ENCODE measurements at regions of chr14 and their contacts with region 1.

Region 1: DNA sequence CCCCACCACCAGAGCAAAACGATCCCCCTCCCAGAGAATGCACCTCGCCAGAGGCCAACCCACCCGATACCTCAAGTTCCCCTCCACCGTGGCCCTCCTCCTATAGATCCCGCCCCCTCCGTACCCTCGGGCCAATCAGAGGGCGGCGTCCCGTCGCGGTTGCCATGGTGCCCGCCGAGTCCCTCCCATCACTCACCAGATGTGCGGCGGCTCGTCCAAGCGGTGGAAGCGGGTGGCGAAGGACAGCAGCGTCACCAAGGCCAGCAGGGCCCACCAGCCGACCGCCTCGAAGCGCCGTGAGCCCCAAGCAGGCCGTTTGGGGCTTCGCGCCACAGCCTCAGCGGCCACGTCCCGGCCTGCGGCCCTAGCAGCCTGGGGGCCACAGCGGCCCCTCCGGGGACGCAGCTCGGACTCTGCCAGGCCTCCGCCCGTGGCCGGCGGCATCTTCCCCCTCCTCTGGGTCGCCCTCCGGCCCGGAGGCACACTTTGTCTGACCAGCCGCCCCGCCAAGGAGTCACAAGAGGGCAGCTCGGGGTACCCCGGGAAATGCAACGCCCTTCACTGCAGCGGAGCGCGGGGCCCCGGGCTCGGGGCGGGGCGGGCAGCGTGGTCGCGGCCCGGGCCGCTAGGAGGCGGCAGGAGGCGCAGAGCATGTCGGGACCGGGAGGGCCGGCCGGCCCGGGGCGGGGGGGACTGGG is at the start of gene POMT2:
- DNase-seq: peak; percentile 85 to 95 (median 91)
- ATAC-seq: peak; percentile 49
- H3K4me3 ChIP-seq: peak within 1 kb of the TSS; percentile 89 to 100
- H3K4me3 Mint-ChIP-seq: peak within 1 kb of the TSS; percentile 99
- H3K27ac ChIP-seq: peak within 1 kb of the TSS; percentile 90 to 97
- H3K27ac Mint-ChIP-seq: peak within 1 kb of the TSS; percentile 98
- H3K4me1 ChIP-seq: peaks cover 12% of the 10 kb centered on the region
- H3K4me1 Mint-ChIP-seq: peaks cover 20% of the 10 kb centered on the region
- H3K27me3 ChIP-seq: no peaks in the 10 kb centered on the region
- H3K27me3 Mint-ChIP-seq: no peaks in the 10 kb centered on the region
- CTCF ChIP-seq: no peak
- total RNA-seq, gene POMT2: 8.4 to 9.6 TPM

Region 2: DNA sequence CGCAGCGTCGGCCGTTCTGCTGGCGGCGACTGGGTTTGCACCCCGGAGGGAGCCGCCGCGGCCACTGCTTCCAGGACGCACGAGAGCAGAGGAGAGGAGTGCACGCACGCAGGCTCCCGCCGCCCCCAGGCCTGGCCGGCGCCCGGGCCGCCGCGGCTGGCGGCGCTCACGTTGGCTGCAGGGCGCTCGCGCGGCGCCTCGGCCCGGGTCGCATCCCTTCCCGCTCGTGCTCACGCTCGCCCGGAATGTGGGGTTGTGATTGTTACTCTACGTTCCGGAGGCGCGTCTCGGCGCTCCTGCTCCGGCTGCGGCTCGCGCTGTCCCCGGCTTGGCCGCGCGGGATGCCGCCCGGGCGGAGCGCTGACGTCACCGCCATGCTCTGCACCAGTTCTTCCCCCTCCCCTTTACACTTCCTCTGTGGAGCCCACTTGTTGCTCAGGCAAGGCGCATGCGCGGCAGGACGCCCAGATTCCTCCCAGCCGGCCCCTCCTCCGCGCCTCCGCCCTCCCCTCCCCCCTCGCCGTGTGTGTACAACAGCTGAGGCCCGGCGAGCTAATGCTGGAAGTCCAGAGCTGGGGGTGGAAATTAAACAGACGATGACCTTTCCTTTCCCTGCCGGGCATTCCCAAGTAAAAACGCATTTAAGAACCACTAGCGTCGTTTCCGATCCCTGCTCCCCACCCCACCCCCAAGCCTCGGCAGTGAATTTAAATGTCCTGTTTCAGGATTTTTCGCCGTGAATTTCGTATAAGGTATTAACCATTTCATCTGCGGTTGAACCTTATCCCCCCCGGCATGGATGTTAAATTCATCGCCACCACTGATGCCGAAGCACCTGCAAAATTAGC is 291.8 kb before region 1 on chr14 and contains the start of gene IRF2BPL:
- CTCF ChIA-PET with region 1: no interaction called
- POLR2A ChIA-PET with region 1: interaction called, 7 read pairs
- intact Hi-C with region 1: loop called in 1 of 2 experiments (anchors 1 kb)
- DNase-seq: peak; percentile 86 to 98 (median 94)
- ATAC-seq: peak; percentile 68
- H3K4me3 ChIP-seq: peak within 1 kb of the TSS; percentile 66 to 94
- H3K4me3 Mint-ChIP-seq: peak within 1 kb of the TSS; percentile 93
- H3K27ac ChIP-seq: peak within 1 kb of the TSS; percentile 90 to 94
- H3K27ac Mint-ChIP-seq: peak within 1 kb of the TSS; percentile 96
- H3K4me1 ChIP-seq: peaks cover 69% of the 10 kb centered on the region
- H3K4me1 Mint-ChIP-seq: peaks cover 60% of the 10 kb centered on the region
- H3K27me3 ChIP-seq: no peaks in the 10 kb centered on the region
- H3K27me3 Mint-ChIP-seq: no peaks in the 10 kb centered on the region
- CTCF ChIP-seq: peak; percentile 2
- total RNA-seq, gene IRF2BPL: 53.7 to 53.9 TPM

Region 3: GRCh38 chr14:77040059-77040740 is 280.2 kb before region 1 on chr14:
- CTCF ChIA-PET with region 1: no interaction called
- POLR2A ChIA-PET with region 1: no interaction called
- intact Hi-C with region 1: loop called in 1 of 2 experiments (anchors 2 kb)
- DNase-seq: peak; percentile 94 to 100 (median 99)
- ATAC-seq: peak; percentile 77
- H3K4me3 ChIP-seq: peak overlapping the region; percentile 42 to 47
- H3K4me3 Mint-ChIP-seq: peak overlapping the region; percentile 86
- H3K27ac ChIP-seq: peak overlapping the region; percentile 90 to 94
- H3K27ac Mint-ChIP-seq: peak overlapping the region; percentile 99
- H3K4me1 ChIP-seq: peaks cover 74% of the 10 kb centered on the region
- H3K4me1 Mint-ChIP-seq: peaks cover 90% of the 10 kb centered on the region
- H3K27me3 ChIP-seq: no peaks in the 10 kb centered on the region
- H3K27me3 Mint-ChIP-seq: no peaks in the 10 kb centered on the region
- CTCF ChIP-seq: no peak

Region 4: DNA sequence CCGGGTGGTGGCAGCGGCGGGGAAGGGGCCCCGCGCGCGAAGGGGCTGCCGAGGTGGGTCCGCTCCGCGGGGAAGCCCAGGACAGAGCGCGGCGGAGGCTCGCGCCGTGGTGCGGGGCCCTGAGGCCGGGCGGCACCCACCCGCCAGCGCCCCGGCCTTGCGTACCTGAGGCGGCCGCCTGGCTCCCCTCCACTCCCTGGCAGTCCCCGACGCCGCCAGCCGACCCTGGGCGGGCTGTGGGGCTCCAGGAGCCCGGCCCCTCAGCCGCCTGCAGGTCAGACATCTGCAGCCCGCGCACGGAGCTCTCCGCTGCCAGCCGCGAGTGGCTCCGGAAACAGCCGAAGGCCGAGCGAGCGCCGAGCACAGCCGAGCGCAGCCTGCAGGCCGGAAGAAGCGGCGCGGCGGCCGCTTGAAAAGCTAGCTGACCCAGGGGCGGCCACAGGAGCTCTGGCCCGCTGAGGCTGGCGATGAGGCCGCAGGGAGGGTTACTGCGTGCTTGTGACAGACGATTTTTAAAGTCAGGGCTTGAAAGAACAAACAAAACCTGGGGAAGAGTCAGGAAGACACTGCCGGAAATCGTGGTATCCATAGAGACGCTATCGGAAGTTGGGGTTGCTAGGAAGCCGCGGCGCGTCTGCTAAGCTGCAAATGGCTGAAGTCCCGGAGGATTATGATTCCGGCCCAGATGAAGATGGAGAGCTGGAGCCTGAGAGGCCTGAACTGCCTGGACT is 56.5 kb after region 1 on chr14 and contains the starts of genes SAMD15 and TMED8:
- CTCF ChIA-PET with region 1: interaction called, 9 read pairs
- POLR2A ChIA-PET with region 1: interaction called, 21 read pairs
- intact Hi-C with region 1: loop called (anchors 1 kb)
- DNase-seq: peak; percentile 69 to 92 (median 82)
- ATAC-seq: peak; percentile 95
- H3K4me3 ChIP-seq: peak within 1 kb of the TSS; percentile 74 to 96
- H3K4me3 Mint-ChIP-seq: peak within 1 kb of the TSS; percentile 89
- H3K27ac ChIP-seq: peak within 1 kb of the TSS; percentile 62 to 91
- H3K27ac Mint-ChIP-seq: peak within 1 kb of the TSS; percentile 87
- H3K4me1 ChIP-seq: peaks cover 17% of the 10 kb centered on the region
- H3K4me1 Mint-ChIP-seq: peaks cover 38% of the 10 kb centered on the region
- H3K27me3 ChIP-seq: no peaks in the 10 kb centered on the region
- H3K27me3 Mint-ChIP-seq: no peaks in the 10 kb centered on the region
- CTCF ChIP-seq: no peak
- total RNA-seq, gene SAMD15: 0.50 to 0.52 TPM
- total RNA-seq, gene TMED8: 4.3 to 4.6 TPM

Region 5: GRCh38 chr14:77760381-77761246 is 440.2 kb after region 1 on chr14 and contains the start of gene SNW1:
- CTCF ChIA-PET with region 1: interaction called, 4 read pairs
- POLR2A ChIA-PET with region 1: interaction called, 4 read pairs
- intact Hi-C with region 1: loop called in 1 of 2 experiments (anchors 1 kb)
- DNase-seq: peak; percentile 78 to 97 (median 89)
- ATAC-seq: peak; percentile 91
- H3K4me3 ChIP-seq: peak within 1 kb of the TSS; percentile 78 to 90
- H3K4me3 Mint-ChIP-seq: peak within 1 kb of the TSS; percentile 96
- H3K27ac ChIP-seq: peak within 1 kb of the TSS; percentile 97 to 99
- H3K27ac Mint-ChIP-seq: peak within 1 kb of the TSS; percentile 98
- H3K4me1 ChIP-seq: peaks cover 34% of the 10 kb centered on the region
- H3K4me1 Mint-ChIP-seq: peaks cover 50% of the 10 kb centered on the region
- H3K27me3 ChIP-seq: no peaks in the 10 kb centered on the region
- H3K27me3 Mint-ChIP-seq: no peaks in the 10 kb centered on the region
- CTCF ChIP-seq: no peak
- total RNA-seq, gene SNW1: 115 to 124 TPM

Region 6: GRCh38 chr14:77799863-77800730 is 479.7 kb after region 1 on chr14 and contains the start of gene ADCK1:
- CTCF ChIA-PET with region 1: no interaction called
- POLR2A ChIA-PET with region 1: no interaction called
- intact Hi-C with region 1: loop called (anchors 1 to 2 kb)
- DNase-seq: peak; percentile 54 to 89 (median 83)
- ATAC-seq: peak; percentile 91
- H3K4me3 ChIP-seq: peak within 1 kb of the TSS; percentile 68 to 96
- H3K4me3 Mint-ChIP-seq: peak within 1 kb of the TSS; percentile 83
- H3K27ac ChIP-seq: peak within 1 kb of the TSS; percentile 73 to 78
- H3K27ac Mint-ChIP-seq: peak within 1 kb of the TSS; percentile 76
- H3K4me1 ChIP-seq: peaks cover 3% of the 10 kb centered on the region
- H3K4me1 Mint-ChIP-seq: peaks cover 10% of the 10 kb centered on the region
- H3K27me3 ChIP-seq: no peaks in the 10 kb centered on the region
- H3K27me3 Mint-ChIP-seq: peaks cover 2% of the 10 kb centered on the region
- CTCF ChIP-seq: no peak
- total RNA-seq, gene ADCK1: 3.6 to 4.7 TPM

Measured in CD8-positive, alpha-beta T cell (primary cell).